ENCODE measurements at regions of chr17 and their contacts with region 1.

Region 1: DNA sequence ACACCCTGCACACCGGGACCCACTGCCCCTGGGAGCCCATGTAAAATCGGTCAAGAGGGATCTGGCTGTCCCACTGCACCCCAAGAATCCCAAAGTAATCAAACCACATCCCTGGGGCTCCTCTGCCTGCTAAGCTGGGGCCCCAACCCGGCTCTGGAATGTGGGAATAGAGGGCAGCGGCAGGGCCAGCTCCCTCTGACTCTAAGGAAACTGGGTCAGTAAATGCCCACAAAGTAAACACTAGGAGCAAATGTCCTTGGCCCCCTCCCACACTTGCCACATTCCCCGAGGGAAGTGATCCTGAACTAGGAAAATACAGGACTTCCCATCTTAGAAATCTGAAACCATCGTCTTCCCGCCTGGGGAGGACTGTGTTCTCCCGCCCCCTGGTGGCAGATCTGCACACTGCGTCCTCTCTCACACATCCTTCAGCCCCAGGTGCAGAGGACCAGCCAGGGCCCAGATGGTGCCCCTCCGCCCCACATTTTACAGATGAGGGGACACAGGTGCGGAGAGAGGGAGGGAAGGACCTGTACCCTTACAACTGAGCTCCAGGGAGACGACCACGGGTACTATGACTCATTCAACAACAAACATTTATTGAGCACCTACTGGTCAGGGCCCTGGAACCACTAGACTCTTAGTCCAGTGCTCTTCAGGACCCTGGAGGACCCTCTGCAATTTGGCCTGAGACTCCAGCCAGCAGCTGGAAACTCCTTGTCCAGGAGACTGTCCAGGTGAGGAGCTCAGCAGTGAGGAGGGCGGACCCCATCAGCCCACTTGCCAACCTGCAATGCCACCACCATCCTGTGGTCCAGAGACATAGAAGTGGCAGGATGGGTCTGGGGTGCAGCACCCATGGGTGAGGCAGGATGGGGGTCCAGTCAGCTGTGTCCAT is 10.1 kb downstream of the P3H4 start:
- DNase-seq: peak; percentile 88

Region 2: GRCh38 chr17:41717408-41718286 is 84.0 kb before region 1 on chr17:
- CTCF ChIA-PET with region 1: no interaction called
- POLR2A ChIA-PET with region 1: no interaction called
- DNase-seq: no peak

Region 3: GRCh38 chr17:41738077-41738735 is 63.4 kb before region 1 on chr17:
- CTCF ChIA-PET with region 1: interaction called, 14 read pairs
- POLR2A ChIA-PET with region 1: interaction called, 24 read pairs
- DNase-seq: peak; percentile 90

Region 4: GRCh38 chr17:41777574-41778188 is 23.9 kb before region 1 on chr17:
- CTCF ChIA-PET with region 1: interaction called, 10 read pairs
- POLR2A ChIA-PET with region 1: no interaction called
- DNase-seq: peak; percentile 42

Region 5: DNA sequence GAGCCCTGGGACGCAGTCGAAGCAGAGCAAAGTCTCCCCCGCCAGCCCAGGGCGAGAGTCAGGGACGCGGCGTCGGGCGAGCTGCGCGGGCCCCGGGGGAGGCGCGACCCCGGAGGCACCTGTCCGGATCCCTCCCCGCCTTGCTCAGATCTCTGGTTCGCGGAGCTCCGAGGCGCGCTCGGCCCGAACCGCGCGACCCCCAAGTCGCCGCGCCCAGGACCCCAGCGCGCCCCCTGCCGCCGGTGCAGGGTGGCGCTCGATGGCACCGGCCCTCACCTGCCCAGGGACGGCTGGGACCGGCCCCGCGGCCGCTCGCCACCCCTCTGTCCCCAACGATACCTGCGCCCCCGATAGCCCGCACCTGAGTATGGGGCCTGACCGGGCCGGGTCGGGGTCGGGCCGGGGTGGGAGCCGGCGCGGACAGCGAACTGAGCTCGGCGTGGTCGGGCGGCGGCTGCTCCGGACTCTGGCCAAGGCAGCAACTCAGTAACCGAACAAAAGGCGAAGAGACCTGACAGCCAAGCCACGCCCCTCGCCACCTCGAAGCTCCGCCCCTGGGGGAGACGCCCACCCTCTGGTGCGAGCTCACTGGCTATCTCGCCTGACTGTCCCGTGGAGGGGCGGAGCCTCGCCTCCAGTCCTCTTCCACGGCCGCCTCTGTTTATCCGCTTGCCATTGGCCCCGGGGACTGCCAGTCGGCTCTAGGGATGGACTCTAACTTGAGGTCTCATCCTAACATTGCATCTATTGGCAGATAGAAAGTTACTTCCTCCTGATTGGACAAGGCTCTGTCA is 15.2 kb before region 1 on chr17 and contains the start of gene JUP:
- CTCF ChIA-PET with region 1: interaction called, 32 read pairs
- POLR2A ChIA-PET with region 1: interaction called, 46 read pairs
- DNase-seq: peak; percentile 100

Region 6: GRCh38 chr17:41824086-41824485 is 22.5 kb after region 1 on chr17:
- CTCF ChIA-PET with region 1: no interaction called
- POLR2A ChIA-PET with region 1: no interaction called
- DNase-seq: no peak

Measured in HEK293T (cell line).